ENCODE measurements at regions of chr7 and their contacts with region 1.

Region 1: DNA sequence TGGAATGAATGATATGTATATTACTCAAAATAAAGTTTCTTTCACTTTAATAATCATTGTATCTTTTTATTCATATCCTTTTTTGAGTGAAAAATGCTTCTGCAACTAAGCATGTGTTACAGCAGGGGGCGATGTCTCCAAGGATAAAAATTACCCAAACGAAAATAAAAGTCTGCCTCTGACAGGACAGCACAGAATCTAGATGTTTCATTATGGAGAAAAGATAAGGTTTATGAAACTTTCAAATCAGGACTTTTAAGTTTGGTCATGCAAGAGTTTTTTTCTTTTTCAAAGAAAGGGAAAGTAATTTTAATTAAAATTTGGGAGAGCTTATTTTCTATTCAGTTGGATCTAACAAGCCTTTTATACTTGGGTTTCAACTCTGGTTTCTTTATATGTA is 48.4 kb downstream of the TES start:
- DNase-seq: peak in 1 of 2 donors; percentile 8
- ATAC-seq: peak; percentile 61 to 75
- H3K4me3 ChIP-seq: peak overlapping the region in 1 of 4 donors; percentile 24
- H3K27ac ChIP-seq: peak overlapping the region in 1 of 4 donors; percentile 45
- H3K4me1 ChIP-seq: peaks cover 0 to 8% of the 10 kb centered on the region in 2 donors
- H3K27me3 ChIP-seq: no peaks in the 10 kb centered on the region
- CTCF ChIP-seq: peak; percentile 83 to 95 (median 85)
- POLR2A ChIP-seq: peak in 1 of 2 donors; percentile 1

Region 2: DNA sequence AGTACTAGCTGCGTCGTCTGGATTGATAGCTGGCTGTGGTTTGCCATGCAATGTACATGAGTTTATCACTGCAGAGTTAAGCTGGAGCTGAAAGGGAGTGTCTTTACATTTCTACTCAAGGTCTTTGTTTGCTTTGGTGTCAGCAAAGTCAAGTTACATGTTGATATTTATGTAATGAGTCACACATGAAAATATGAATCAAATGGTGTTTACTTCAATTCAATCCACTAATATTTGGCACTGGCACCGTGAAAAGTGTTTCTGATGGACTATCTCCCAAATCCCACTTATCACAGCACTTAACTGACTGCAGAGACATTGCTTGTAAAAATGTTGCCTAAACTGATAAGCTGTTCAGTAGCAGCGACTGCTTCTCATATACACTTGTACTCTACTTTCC is 624.1 kb before region 1 on chr7:
- in situ Hi-C with region 1: no loop called
- intact Hi-C with region 1: no loop called
- DNase-seq: no peak
- ATAC-seq: no peak
- H3K4me3 ChIP-seq: no peak overlapping the region
- H3K27ac ChIP-seq: no peak overlapping the region
- H3K4me1 ChIP-seq: no peaks in the 10 kb centered on the region
- H3K27me3 ChIP-seq: no peaks in the 10 kb centered on the region
- CTCF ChIP-seq: no peak
- POLR2A ChIP-seq: no peak

Region 3: DNA sequence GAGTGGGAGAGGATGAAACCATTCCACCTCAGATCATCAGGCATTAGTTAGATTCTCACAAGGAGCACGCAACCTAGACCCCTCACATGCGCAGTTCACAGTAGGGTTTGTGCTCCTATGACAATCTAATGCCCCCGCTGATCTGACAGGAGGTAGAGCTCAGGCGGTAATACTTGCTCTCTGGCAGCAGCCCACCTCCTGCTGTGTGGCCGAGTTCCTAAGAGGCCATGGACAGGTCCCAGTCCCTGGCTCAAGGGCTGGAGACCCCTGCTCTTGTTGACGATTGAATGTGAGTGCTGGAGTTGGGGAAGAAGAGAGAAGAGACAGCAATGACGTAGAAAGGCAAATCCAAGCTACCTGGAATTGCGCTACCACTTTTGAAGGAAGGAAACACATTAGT is 495.4 kb before region 1 on chr7:
- in situ Hi-C with region 1: no loop called
- intact Hi-C with region 1: no loop called
- DNase-seq: no peak
- ATAC-seq: no peak
- H3K4me3 ChIP-seq: no peak overlapping the region
- H3K27ac ChIP-seq: no peak overlapping the region
- H3K4me1 ChIP-seq: no peaks in the 10 kb centered on the region
- H3K27me3 ChIP-seq: no peaks in the 10 kb centered on the region
- CTCF ChIP-seq: no peak
- POLR2A ChIP-seq: no peak

Region 4: DNA sequence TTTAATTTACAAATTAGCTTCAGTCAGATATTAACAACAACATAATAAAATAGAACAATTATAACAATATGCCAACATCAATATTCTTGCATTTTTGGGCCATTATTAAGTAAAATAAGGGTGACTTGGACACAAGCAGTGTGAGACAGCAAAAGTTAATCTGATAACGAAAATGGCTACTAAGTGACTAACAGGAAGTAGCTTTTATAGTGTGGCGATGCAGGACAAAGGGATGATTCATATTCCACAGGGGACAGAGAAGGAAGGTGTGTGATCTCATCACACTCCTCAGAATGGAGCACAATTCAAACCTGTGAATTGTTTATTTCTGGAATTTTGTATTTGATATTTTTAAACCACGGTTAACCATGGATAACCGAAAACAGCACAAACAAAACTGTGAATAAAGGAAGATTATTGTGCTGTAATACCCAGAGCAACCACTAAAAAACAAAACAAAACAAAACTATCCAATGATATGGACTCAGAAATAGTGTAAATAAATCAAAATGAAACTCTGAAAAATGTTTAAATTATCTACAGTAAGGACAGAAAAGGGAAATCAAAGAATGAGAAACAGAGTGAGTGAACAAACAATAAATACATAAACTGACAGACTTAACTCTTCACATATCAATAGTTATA is 161.2 kb before region 1 on chr7:
- in situ Hi-C with region 1: no loop called
- intact Hi-C with region 1: no loop called
- DNase-seq: no peak
- ATAC-seq: no peak
- H3K4me3 ChIP-seq: no peak overlapping the region
- H3K27ac ChIP-seq: no peak overlapping the region
- H3K4me1 ChIP-seq: no peaks in the 10 kb centered on the region
- H3K27me3 ChIP-seq: no peaks in the 10 kb centered on the region
- CTCF ChIP-seq: peak in 1 of 5 experiments; percentile 18
- POLR2A ChIP-seq: no peak

Region 5: GRCh38 chr7:116331020-116331419 is 72.3 kb after region 1 on chr7:
- in situ Hi-C with region 1: no loop called
- intact Hi-C with region 1: no loop called
- DNase-seq: no peak
- ATAC-seq: no peak
- H3K4me3 ChIP-seq: no peak overlapping the region
- H3K27ac ChIP-seq: no peak overlapping the region
- H3K4me1 ChIP-seq: no peaks in the 10 kb centered on the region
- H3K27me3 ChIP-seq: no peaks in the 10 kb centered on the region
- CTCF ChIP-seq: no peak
- POLR2A ChIP-seq: no peak

Region 6: DNA sequence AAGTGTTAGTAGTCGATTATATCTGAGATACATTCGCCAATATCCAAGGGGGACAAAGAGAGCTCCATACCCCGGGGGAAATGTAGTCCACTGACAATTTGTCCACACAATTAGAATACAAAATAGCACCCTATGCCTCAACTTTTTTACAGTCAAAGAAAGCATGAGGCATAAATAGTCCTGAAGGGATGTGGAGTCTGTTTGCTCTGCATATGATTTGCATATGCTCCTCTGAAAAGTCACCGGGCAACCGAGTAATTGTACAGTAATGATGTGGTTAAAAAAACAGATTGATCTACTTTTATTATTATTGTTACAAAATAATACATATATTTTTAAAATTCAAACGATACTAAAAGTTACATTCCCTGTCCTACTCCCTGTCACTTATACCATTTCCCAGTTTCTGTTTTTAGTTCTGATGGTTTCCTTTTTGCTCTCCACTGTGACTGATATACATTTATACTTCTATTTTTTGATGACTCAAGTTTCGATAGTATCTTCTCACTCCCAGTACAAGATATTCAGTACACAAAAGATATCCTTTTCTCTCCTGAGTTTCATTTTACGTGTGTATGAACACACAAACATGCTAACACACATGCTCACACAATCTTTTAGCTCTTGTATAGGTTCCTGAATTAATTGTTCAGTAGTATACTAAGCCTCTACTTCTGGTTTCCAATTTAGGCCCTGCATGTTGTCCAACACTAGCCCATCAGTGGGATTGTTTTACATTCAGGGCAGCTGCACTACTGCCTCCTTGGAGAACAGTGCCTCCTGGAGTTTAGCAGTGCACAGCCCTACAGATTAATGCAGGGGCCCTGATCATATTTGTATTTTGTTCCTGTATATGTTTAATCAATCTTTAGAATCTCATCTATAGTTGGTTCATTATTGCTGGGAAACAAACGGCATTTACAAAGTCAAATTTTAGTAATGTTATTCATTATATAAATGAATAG is 82.5 kb after region 1 on chr7:
- in situ Hi-C with region 1: loop called in 1 of 4 experiments (anchors 5 kb)
- intact Hi-C with region 1: loop called (anchors 5 kb)
- DNase-seq: no peak
- ATAC-seq: peak; percentile 76 to 85
- H3K4me3 ChIP-seq: no peak overlapping the region
- H3K27ac ChIP-seq: peak overlapping the region in 2 of 4 donors; percentile 1 to 66
- H3K4me1 ChIP-seq: peaks cover 0 to 16% of the 10 kb centered on the region in 2 donors
- H3K27me3 ChIP-seq: no peaks in the 10 kb centered on the region
- CTCF ChIP-seq: peak; percentile 22 to 57 (median 35)
- POLR2A ChIP-seq: no peak

Region 7: DNA sequence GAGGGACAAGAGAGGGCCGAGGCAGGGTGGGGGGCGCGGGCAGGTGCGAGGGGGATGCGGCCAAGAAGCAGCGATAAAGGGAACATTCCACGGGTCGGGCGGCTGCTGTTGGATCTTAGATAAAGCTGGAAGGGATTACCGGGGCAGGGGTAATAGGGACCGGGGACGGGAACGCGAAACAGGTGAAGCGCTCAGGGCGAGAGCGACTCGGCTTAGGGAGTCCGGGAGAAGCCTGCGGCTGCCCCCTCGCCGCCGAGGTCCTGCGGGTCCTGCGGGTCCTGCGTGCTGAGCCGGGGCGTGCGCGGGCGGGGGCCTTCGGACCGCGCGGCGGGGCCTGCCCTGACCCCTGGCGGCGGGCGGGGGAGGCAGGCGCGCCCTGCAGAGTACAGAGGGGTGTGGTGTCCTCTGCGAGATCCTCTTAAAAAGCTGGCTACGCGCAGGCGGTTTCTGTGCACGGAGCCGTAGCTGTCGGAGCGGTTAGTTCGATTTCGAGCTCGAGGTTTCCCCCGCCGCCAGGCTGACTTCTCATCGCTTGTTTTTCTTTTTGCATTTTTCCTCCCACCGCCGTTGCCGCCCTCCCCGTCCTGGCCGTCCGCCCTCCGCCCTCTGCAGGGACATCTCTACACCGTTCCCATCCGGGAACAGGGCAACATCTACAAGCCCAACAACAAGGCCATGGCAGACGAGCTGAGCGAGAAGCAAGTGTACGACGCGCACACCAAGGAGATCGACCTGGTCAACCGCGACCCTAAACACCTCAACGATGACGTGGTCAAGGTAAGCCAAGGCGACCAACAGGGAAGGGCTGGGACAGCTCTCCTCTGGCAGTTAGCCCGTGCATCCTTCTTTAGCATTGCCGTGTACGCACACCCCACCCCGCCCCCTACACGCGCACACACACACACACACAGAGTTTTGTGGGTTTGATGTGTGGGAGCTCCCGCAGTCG is 267.5 kb after region 1 on chr7:
- in situ Hi-C with region 1: loop called (anchors 5 to 10 kb)
- intact Hi-C with region 1: loop called (anchors 1 kb)
- DNase-seq: peak; percentile 53 to 55
- ATAC-seq: peak; percentile 72 to 80
- H3K4me3 ChIP-seq: peak overlapping the region; percentile 59 to 79 (median 70)
- H3K27ac ChIP-seq: peak overlapping the region; percentile 82 to 85 (median 82)
- H3K4me1 ChIP-seq: peaks cover 0 to 14% of the 10 kb centered on the region in 2 donors
- H3K27me3 ChIP-seq: no peaks in the 10 kb centered on the region
- CTCF ChIP-seq: peak; percentile 67 to 95 (median 88)
- POLR2A ChIP-seq: peak; percentile 43 to 58

Region 8: GRCh38 chr7:116576350-116577319 is 317.9 kb after region 1 on chr7:
- in situ Hi-C with region 1: loop called in 3 of 4 experiments (anchors 5 to 25 kb)
- intact Hi-C with region 1: no loop called
- DNase-seq: no peak
- ATAC-seq: peak in 1 of 2 donors; percentile 32
- H3K4me3 ChIP-seq: no peak overlapping the region
- H3K27ac ChIP-seq: peak overlapping the region; percentile 2 to 64 (median 42)
- H3K4me1 ChIP-seq: peaks cover 13 to 17% of the 10 kb centered on the region in 2 donors
- H3K27me3 ChIP-seq: no peaks in the 10 kb centered on the region
- CTCF ChIP-seq: no peak
- POLR2A ChIP-seq: no peak

Region 9: GRCh38 chr7:116582806-116583444 is 324.2 kb after region 1 on chr7:
- in situ Hi-C with region 1: loop called in 3 of 4 experiments (anchors 5 to 25 kb)
- intact Hi-C with region 1: no loop called
- DNase-seq: peak; percentile 14 to 25
- ATAC-seq: peak; percentile 64 to 74
- H3K4me3 ChIP-seq: no peak overlapping the region
- H3K27ac ChIP-seq: peak overlapping the region; percentile 27 to 73 (median 52)
- H3K4me1 ChIP-seq: peaks cover under 1 to 6% of the 10 kb centered on the region in 2 donors
- H3K27me3 ChIP-seq: no peaks in the 10 kb centered on the region
- CTCF ChIP-seq: no peak
- POLR2A ChIP-seq: no peak

Measured in gastrocnemius medialis (tissue), 4 donors.